ENCODE measurements at regions of chr20 and their contacts with region 1.

Region 1: GRCh38 chr20:5788385-5788895 is 38.2 kb downstream of the SHLD1 start:
- DNase-seq: peak; percentile 75
- ATAC-seq: peak; percentile 90 to 91
- H3K4me3 ChIP-seq: no peak overlapping the region
- H3K27ac ChIP-seq: no peak overlapping the region
- H3K4me1 ChIP-seq: peaks cover 20% of the 10 kb centered on the region
- H3K27me3 ChIP-seq: no peaks in the 10 kb centered on the region
- CTCF ChIP-seq: peak; percentile 87

Region 2: GRCh38 chr20:5550733-5551529 is 237.5 kb before region 1 on chr20:
- intact Hi-C with region 1: no loop called
- DNase-seq: no peak
- ATAC-seq: peak in 1 of 2 donors; percentile 39
- H3K4me3 ChIP-seq: no peak overlapping the region
- H3K27ac ChIP-seq: no peak overlapping the region
- H3K4me1 ChIP-seq: peaks cover 8% of the 10 kb centered on the region
- H3K27me3 ChIP-seq: no peaks in the 10 kb centered on the region
- CTCF ChIP-seq: no peak

Region 3: DNA sequence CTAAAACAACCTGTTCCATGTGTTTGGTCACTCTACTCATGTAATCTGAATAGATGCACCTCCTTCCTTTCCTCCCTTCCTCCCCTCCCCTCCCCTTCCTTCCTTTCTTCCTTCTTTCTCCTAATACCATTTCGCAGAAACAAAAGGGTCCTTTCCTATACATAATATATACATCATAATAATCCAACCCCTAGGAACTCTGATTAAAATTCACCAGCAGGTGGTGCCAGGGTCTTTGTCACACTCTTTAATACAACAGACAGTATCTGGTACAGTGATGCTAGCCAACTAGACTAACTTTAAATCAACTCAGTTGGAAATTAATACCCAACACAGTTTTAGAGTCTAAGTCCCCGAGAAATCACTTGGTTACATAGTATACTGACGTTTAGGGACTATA is 219.4 kb before region 1 on chr20:
- intact Hi-C with region 1: loop called (anchors 10 kb)
- DNase-seq: no peak
- ATAC-seq: peak; percentile 51 to 59
- H3K4me3 ChIP-seq: no peak overlapping the region
- H3K27ac ChIP-seq: no peak overlapping the region
- H3K4me1 ChIP-seq: peaks cover 22% of the 10 kb centered on the region
- H3K27me3 ChIP-seq: no peaks in the 10 kb centered on the region
- CTCF ChIP-seq: peak; percentile 35

Measured in lower lobe of right lung (tissue), 2 donors.